Common myeloid progenitor, CD34-positive (primary cell): ENCODE measurements at regions of chr17 and their contacts with region 1.

Region 1: GRCh38 chr17:7632492-7632894 is 2.6 kb downstream of the SHBG start:
- DNase-seq: peak; percentile 74 to 80 (median 76)
- H3K4me3 ChIP-seq: no peak overlapping the region
- H3K27ac ChIP-seq: no peak overlapping the region
- H3K4me1 ChIP-seq: peaks cover 0 to 6% (median 1%) of the 10 kb centered on the region in 4 experiments
- H3K27me3 ChIP-seq: no peaks in the 10 kb centered on the region

Region 2: GRCh38 chr17:7644775-7645174 is 12.3 kb after region 1 on chr17:
- CTCF ChIA-PET with region 1: interaction called, 28 read pairs
- POLR2A ChIA-PET with region 1: interaction called, 4 read pairs
- DNase-seq: no peak
- H3K4me3 ChIP-seq: no peak overlapping the region
- H3K27ac ChIP-seq: no peak overlapping the region
- H3K4me1 ChIP-seq: no peaks in the 10 kb centered on the region
- H3K27me3 ChIP-seq: peaks cover 0 to 3% (median 2%) of the 10 kb centered on the region in 5 experiments

Region 3: GRCh38 chr17:7673239-7673638 is 40.7 kb after region 1 on chr17:
- CTCF ChIA-PET with region 1: interaction called, 11 read pairs
- POLR2A ChIA-PET with region 1: no interaction called
- DNase-seq: peak; percentile 16 to 65 (median 40)
- H3K4me3 ChIP-seq: no peak overlapping the region
- H3K27ac ChIP-seq: no peak overlapping the region
- H3K4me1 ChIP-seq: no peaks in the 10 kb centered on the region
- H3K27me3 ChIP-seq: no peaks in the 10 kb centered on the region

Region 4: GRCh38 chr17:7716901-7717755 is 84.6 kb after region 1 on chr17 and contains the start of gene DNAH2:
- CTCF ChIA-PET with region 1: interaction called, 11 read pairs
- POLR2A ChIA-PET with region 1: no interaction called
- DNase-seq: peak; percentile 63 to 84 (median 82)
- H3K4me3 ChIP-seq: peak within 1 kb of the TSS; percentile 40 to 79 (median 66)
- H3K27ac ChIP-seq: no peak within 1 kb of the TSS
- H3K4me1 ChIP-seq: peaks cover 0 to 39% (median 30%) of the 10 kb centered on the region in 4 experiments
- H3K27me3 ChIP-seq: peaks cover 0 to 12% (median 8%) of the 10 kb centered on the region in 5 experiments

Region 5: GRCh38 chr17:7825206-7825990 is 192.9 kb after region 1 on chr17:
- CTCF ChIA-PET with region 1: no interaction called
- POLR2A ChIA-PET with region 1: no interaction called
- DNase-seq: peak in 1 of 3 donors; percentile 15
- H3K4me3 ChIP-seq: no peak overlapping the region
- H3K27ac ChIP-seq: no peak overlapping the region
- H3K4me1 ChIP-seq: no peaks in the 10 kb centered on the region
- H3K27me3 ChIP-seq: peaks cover 0 to 2% (median 0%) of the 10 kb centered on the region in 5 experiments